ENCODE measurements at regions of chr3 and their contacts with region 1.

Region 1: GRCh38 chr3:197298341-197298857 is at the start of gene DLG1:
- DNase-seq: peak; percentile 96
- H3K4me3 ChIP-seq: peak within 1 kb of the TSS; percentile 87 to 98 (median 92)
- H3K27ac ChIP-seq: peak within 1 kb of the TSS; percentile 91 to 94 (median 94)
- H3K4me1 ChIP-seq: peaks cover 15 to 45% (median 30%) of the 10 kb centered on the region in 4 donors
- H3K27me3 ChIP-seq: no peaks in the 10 kb centered on the region
- CTCF ChIP-seq: no peak
- EP300 ChIP-seq: no peak
- POLR2A ChIP-seq: peak; percentile 24
- total RNA-seq, gene DLG1: 56.8 to 73.1 (median 69.1) TPM

Region 2: GRCh38 chr3:197406266-197406665 is 107.9 kb after region 1 on chr3:
- intact Hi-C with region 1: no loop called
- DNase-seq: no peak
- H3K4me3 ChIP-seq: no peak overlapping the region
- H3K27ac ChIP-seq: no peak overlapping the region
- H3K4me1 ChIP-seq: no peaks in the 10 kb centered on the region
- H3K27me3 ChIP-seq: no peaks in the 10 kb centered on the region
- CTCF ChIP-seq: no peak
- EP300 ChIP-seq: no peak
- POLR2A ChIP-seq: no peak

Region 3: GRCh38 chr3:197456261-197457091 is 158.1 kb after region 1 on chr3:
- intact Hi-C with region 1: loop called (anchors 2 kb)
- DNase-seq: peak; percentile 96
- H3K4me3 ChIP-seq: peak overlapping the region; percentile 56 to 68 (median 59)
- H3K27ac ChIP-seq: peak overlapping the region; percentile 46 to 80 (median 65)
- H3K4me1 ChIP-seq: peaks cover 0 to 16% (median 15%) of the 10 kb centered on the region in 4 donors
- H3K27me3 ChIP-seq: peaks cover 0 to 6% (median 0%) of the 10 kb centered on the region in 4 donors
- CTCF ChIP-seq: no peak
- EP300 ChIP-seq: no peak
- POLR2A ChIP-seq: no peak

Measured in esophagus muscularis mucosa (tissue), 4 donors.